Endothelial cell of umbilical vein (primary cell): ENCODE measurements at regions of chr4 and their contacts with region 1.

Region 1: DNA sequence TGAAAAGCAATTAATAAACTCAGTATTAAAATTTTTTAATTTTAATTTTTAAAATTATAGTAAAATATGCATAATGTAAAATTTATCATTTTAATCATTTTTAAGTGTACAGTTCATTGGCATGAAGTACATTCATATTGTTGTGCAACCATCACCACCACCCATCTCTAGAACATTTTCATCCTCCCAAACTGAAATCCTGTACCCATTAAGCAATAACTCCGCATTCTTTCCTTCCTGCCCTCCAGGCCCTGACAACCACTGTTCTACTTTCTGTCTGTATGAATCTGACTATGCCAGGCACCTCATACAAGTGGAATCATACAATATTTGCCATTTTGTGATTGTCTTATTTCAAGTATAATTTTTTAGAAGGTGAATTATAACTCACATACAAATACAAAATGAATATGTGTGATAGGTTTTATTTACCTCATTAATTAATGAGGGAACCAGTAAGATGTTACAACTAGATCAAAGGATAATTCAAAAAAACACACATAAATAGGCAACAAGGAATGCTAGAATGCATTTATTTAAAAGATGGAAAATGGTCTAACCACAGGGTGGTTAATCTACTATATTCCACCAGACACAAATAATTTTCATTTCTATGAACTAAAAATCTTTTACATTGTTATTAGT is 13.1 kb upstream of the AFF1 start:
- DNase-seq: no peak
- H3K4me3 ChIP-seq: no peak overlapping the region
- H3K27ac ChIP-seq: no peak overlapping the region
- H3K4me1 ChIP-seq: peaks cover 19% of the 10 kb centered on the region
- H3K27me3 ChIP-seq: no peaks in the 10 kb centered on the region
- CTCF ChIP-seq: no peak
- POLR2A ChIP-seq: no peak

Region 2: GRCh38 chr4:86934771-86935565 is 13.2 kb after region 1 on chr4 and contains the start of gene AFF1:
- CTCF ChIA-PET with region 1: interaction called, 66 read pairs
- POLR2A ChIA-PET with region 1: interaction called, 5 read pairs
- dilution Hi-C with region 1: no loop called
- intact Hi-C with region 1: loop called (anchors 1 kb)
- DNase-seq: peak; percentile 93
- H3K4me3 ChIP-seq: peak within 1 kb of the TSS; percentile 59 to 86 (median 84)
- H3K27ac ChIP-seq: peak within 1 kb of the TSS; percentile 89
- H3K4me1 ChIP-seq: peaks cover 42% of the 10 kb centered on the region
- H3K27me3 ChIP-seq: no peaks in the 10 kb centered on the region
- CTCF ChIP-seq: peak; percentile 15 to 28
- POLR2A ChIP-seq: peak; percentile 91
- total RNA-seq, gene AFF1: 80.7 and 106 TPM in 2 replicates

Region 3: DNA sequence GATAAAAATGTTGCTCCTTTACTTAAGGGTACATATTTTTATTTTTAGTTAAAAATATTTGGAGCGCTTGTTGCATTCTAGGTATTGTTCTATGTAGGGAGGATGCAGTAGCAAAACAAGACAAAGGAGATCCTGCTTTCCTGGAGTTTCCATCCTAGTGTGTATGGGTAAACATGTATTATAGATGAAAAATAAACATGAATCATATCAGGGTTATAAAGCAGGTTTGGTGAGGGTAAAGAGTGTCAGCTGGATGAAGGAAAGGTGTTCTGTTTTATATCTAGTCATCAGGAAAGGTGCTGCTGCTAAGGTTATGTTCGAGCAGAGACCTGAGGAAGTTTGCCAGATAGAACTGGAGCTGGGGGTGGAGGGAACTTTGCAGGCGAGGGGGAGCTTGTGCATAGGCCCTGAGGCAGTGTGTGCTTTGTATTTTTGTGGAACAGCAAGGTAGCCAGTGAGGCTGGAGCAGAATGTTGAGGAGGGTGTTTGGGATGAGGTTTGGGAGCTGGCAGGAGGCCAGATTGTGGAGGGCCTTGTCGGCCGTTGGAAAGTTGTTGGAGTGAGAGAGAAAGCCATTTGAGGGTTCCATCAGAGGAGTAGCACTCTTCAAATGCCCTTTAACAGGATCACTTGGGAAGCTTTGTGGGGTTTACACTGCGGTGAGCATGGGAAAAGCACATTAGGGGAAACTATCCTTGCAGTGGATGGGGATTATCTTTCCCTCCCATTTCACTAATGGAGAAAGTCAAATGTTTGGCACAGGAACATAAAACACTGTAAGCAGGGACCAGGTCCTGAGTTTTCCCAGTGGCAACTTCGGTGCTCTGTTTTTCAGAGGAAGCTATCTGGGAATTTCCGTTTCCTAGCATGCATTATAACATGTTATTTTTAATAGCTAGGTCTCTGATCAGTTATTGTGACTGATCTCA is 49.0 kb after region 1 on chr4:
- CTCF ChIA-PET with region 1: interaction called, 10 read pairs
- POLR2A ChIA-PET with region 1: no interaction called
- dilution Hi-C with region 1: no loop called
- intact Hi-C with region 1: loop called (anchors 1 kb)
- DNase-seq: peak; percentile 55
- H3K4me3 ChIP-seq: no peak overlapping the region
- H3K27ac ChIP-seq: no peak overlapping the region
- H3K4me1 ChIP-seq: peaks cover 72% of the 10 kb centered on the region
- H3K27me3 ChIP-seq: no peaks in the 10 kb centered on the region
- CTCF ChIP-seq: no peak
- POLR2A ChIP-seq: no peak

Region 4: GRCh38 chr4:87053802-87054767 is 132.4 kb after region 1 on chr4:
- CTCF ChIA-PET with region 1: interaction called, 16 read pairs
- POLR2A ChIA-PET with region 1: no interaction called
- dilution Hi-C with region 1: no loop called
- intact Hi-C with region 1: no loop called
- DNase-seq: peak; percentile 56
- H3K4me3 ChIP-seq: no peak overlapping the region
- H3K27ac ChIP-seq: no peak overlapping the region
- H3K4me1 ChIP-seq: peaks cover 27% of the 10 kb centered on the region
- H3K27me3 ChIP-seq: no peaks in the 10 kb centered on the region
- CTCF ChIP-seq: no peak
- POLR2A ChIP-seq: no peak

Region 5: DNA sequence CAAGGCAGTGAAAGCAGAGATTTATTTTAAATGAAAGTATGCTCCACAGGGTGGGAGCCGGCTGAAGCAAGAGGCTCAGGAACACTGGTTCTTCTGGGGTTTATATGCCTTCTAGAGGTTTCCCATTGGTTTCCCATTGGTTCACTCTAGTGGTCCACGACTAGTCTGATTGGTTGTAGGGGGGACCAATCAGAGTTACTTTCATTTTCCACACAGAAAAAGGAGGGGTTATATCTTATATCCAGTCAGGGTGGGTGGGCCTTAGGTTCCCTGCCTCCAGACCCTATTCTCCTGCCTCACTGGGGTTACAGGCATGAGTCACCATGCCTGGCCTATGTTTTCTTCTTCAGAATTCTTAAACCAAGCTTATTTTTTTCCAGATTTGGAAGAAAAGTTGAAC is 197.1 kb after region 1 on chr4:
- CTCF ChIA-PET with region 1: interaction called, 40 read pairs
- POLR2A ChIA-PET with region 1: no interaction called
- dilution Hi-C with region 1: loop called (anchors 25 kb)
- intact Hi-C with region 1: no loop called
- DNase-seq: peak; percentile 56
- H3K4me3 ChIP-seq: no peak overlapping the region
- H3K27ac ChIP-seq: no peak overlapping the region
- H3K4me1 ChIP-seq: peaks cover 23% of the 10 kb centered on the region
- H3K27me3 ChIP-seq: no peaks in the 10 kb centered on the region
- CTCF ChIP-seq: no peak
- POLR2A ChIP-seq: no peak

Region 6: GRCh38 chr4:87345139-87345538 is 423.4 kb after region 1 on chr4:
- CTCF ChIA-PET with region 1: no interaction called
- POLR2A ChIA-PET with region 1: no interaction called
- dilution Hi-C with region 1: no loop called
- intact Hi-C with region 1: no loop called
- DNase-seq: no peak
- H3K4me3 ChIP-seq: no peak overlapping the region
- H3K27ac ChIP-seq: no peak overlapping the region
- H3K4me1 ChIP-seq: no peaks in the 10 kb centered on the region
- H3K27me3 ChIP-seq: no peaks in the 10 kb centered on the region
- CTCF ChIP-seq: no peak
- POLR2A ChIP-seq: no peak